Vagina (tissue), 2 donors: ENCODE measurements at regions of chr10 and their contacts with region 1.

Region 1: DNA sequence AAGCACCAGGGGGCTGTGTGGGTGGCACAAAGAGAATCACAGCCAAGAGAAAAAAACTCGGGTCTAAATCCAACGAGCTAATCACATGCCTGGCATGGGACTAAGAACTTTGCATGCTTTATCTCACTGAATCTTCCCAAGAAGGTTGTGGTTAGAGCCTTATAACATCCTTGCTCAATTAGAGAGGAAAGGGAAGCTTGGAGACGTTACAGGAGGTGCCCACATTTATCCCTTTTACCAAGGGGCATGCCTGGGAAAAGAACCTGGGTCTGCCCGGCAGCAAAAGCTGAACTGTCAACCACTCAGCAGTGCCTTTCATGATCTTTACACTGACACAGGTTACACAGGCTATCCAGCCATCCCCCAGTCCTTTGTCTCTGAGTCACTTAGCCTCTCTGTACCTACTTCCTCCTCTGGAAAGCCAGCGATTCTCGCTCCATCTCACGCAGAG is 190.1 kb downstream of the PRPF18 start:
- DNase-seq: no peak
- H3K4me3 ChIP-seq: no peak overlapping the region
- H3K27ac ChIP-seq: no peak overlapping the region
- H3K4me1 ChIP-seq: peaks cover 6% of the 10 kb centered on the region
- H3K27me3 ChIP-seq: no peaks in the 10 kb centered on the region
- CTCF ChIP-seq: no peak
- POLR2A ChIP-seq: no peak

Region 2: GRCh38 chr10:13613519-13613918 is 163.4 kb before region 1 on chr10:
- intact Hi-C with region 1: loop called (anchors 10 kb)
- DNase-seq: no peak
- H3K4me3 ChIP-seq: no peak overlapping the region
- H3K27ac ChIP-seq: no peak overlapping the region
- H3K4me1 ChIP-seq: no peaks in the 10 kb centered on the region
- H3K27me3 ChIP-seq: no peaks in the 10 kb centered on the region
- CTCF ChIP-seq: peak in 2 of 3 experiments; percentile 24 to 28
- POLR2A ChIP-seq: no peak

Region 3: GRCh38 chr10:13659897-13660550 is 116.9 kb before region 1 on chr10:
- intact Hi-C with region 1: loop called (anchors 1 kb)
- DNase-seq: no peak
- H3K4me3 ChIP-seq: no peak overlapping the region
- H3K27ac ChIP-seq: peak overlapping the region; percentile 36
- H3K4me1 ChIP-seq: peaks cover 20% of the 10 kb centered on the region
- H3K27me3 ChIP-seq: no peaks in the 10 kb centered on the region
- CTCF ChIP-seq: peak; percentile 81 to 87 (median 86)
- POLR2A ChIP-seq: no peak

Region 4: GRCh38 chr10:13803611-13804554 is 27.0 kb after region 1 on chr10:
- intact Hi-C with region 1: no loop called
- DNase-seq: no peak
- H3K4me3 ChIP-seq: no peak overlapping the region
- H3K27ac ChIP-seq: no peak overlapping the region
- H3K4me1 ChIP-seq: no peaks in the 10 kb centered on the region
- H3K27me3 ChIP-seq: no peaks in the 10 kb centered on the region
- CTCF ChIP-seq: no peak
- POLR2A ChIP-seq: no peak